PC-9 (cell line): ENCODE measurements at regions of chr9 and their contacts with region 1.

Region 1: DNA sequence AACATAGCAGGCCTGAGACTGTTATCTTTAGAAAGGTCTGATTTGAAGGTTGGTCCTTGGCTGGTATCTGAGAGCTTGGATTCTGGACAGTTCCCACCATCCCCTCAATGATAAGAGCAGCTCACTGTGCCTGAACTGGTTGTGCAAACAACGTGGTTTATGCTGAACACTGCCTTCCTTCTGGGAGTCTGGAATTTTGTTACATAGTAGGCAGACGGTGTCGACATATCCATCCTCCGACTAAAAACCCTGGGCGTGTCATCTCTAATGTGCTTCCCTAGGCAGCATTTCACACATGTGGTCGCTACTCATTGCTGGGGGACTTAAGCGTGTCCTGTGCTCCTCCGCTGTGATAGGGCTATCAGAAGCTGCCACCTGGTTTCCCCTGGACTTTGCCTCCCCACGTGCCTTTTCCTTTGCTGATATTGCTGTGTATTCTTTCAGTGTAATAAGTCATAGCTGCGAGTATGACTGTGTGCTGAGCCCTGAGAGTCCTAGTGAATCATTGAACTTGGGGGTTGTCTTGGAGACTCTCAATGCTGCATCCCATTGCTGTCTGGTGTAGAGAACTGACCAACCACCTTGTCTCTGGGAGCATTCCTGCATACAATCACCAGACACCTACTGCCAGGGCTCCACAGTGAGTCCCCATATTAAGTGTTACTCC is 119.1 kb upstream of the TBC1D2 start:
- DNase-seq: peak; percentile 35 to 88
- H3K4me3 ChIP-seq: no peak overlapping the region
- H3K27ac ChIP-seq: peak overlapping the region; percentile 71
- H3K4me1 ChIP-seq: peaks cover 37% of the 10 kb centered on the region
- H3K27me3 ChIP-seq: no peaks in the 10 kb centered on the region
- CTCF ChIP-seq: no peak

Region 2: DNA sequence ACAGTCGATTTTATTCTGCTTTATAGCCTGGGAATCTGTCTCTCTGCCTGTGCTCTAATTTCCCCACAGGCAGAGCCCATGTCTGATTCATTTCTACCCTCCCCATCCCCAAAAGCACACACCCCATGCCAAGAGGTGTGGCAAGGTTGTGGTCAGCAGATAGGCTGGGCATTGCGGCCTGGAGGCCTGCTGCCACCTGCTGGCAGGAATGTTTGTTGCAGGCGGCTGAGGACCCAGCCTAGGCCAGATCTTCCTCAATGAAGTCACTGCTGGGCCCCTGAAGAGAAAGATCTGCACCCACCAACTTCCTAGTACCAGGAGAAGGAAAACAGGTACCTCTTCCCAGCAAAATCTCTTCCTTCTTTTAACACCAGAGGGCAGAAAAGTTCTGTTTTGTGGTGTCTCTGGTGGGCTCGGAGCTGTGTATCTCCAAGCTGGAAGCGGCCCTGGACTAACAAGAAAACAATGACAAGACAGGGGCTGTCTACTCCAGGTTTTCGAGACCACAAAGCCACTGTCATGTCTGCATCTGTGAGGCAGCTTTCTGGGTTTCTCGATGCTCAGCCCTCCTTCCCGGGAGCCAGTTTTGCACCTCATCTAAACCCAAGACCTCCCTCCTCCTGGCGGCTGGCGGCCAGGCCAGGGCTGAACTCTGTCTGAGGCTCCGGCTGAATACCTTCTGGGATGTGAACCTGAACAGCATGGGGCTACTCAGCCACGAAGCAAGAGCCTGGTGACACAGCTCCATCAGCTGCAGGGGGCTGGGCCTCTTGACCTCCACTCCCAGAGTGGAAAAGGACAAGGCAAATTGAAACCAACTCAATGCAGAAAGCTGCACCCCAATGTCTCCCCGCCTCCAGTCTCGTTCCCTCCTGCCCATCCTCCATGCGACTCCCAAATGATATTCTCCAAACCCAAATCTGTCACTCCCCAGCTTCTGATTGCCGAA is 416.9 kb after region 1 on chr9:
- CTCF ChIA-PET with region 1: no interaction called
- POLR2A ChIA-PET with region 1: no interaction called
- intact Hi-C with region 1: loop called (anchors 2 kb)
- DNase-seq: peak; percentile 92 to 96
- H3K4me3 ChIP-seq: 0 out of 2 replicates have a peak overlapping the region, but pooled peaks have one; percentile 30
- H3K27ac ChIP-seq: peak overlapping the region; percentile 70
- H3K4me1 ChIP-seq: peaks cover 59% of the 10 kb centered on the region
- H3K27me3 ChIP-seq: no peaks in the 10 kb centered on the region
- CTCF ChIP-seq: peak; percentile 100